ENCODE measurements at regions of chr10 and their contacts with region 1.

Region 1: DNA sequence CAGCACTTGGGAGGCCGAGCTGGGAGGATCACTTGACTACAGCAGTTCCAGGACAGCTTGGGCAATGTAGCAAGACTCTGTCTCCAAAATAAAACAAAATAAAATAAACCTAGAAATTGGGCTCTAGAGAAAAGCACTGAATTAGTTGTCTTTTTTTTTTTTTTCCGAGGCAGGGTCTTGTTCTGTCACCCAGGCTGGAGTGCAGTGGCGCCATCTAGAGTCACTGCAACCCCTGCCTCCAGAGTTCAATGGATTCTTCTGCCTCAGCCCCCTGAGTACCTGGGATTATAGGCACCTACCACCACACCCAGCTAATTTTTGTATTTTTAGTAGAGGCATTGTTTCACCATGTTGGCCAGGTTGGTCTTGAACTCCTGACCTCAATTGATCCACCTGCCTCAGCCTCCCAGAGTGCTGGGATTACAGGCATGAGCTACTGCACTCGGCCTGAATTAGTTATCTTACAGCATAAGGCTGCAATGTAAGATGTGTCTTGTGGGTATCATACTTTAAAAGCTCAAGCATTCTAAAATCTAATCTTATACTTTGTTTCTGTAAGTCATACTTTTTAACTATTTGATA is 12.8 kb downstream of the MEIG1 start:
- H3K4me3 ChIP-seq: no peak overlapping the region
- H3K27ac ChIP-seq: no peak overlapping the region
- H3K4me1 ChIP-seq: no peaks in the 10 kb centered on the region
- CTCF ChIP-seq: no peak

Region 2: GRCh38 chr10:14959276-14960057 is 12.5 kb before region 1 on chr10 and contains the start of gene MEIG1:
- CTCF ChIA-PET with region 1: interaction called, 14 read pairs
- POLR2A ChIA-PET with region 1: interaction called, 7 read pairs
- H3K4me3 ChIP-seq: peak within 1 kb of the TSS; percentile 74
- H3K27ac ChIP-seq: peak within 1 kb of the TSS; percentile 90
- H3K4me1 ChIP-seq: no peaks in the 10 kb centered on the region
- CTCF ChIP-seq: no peak

Region 3: DNA sequence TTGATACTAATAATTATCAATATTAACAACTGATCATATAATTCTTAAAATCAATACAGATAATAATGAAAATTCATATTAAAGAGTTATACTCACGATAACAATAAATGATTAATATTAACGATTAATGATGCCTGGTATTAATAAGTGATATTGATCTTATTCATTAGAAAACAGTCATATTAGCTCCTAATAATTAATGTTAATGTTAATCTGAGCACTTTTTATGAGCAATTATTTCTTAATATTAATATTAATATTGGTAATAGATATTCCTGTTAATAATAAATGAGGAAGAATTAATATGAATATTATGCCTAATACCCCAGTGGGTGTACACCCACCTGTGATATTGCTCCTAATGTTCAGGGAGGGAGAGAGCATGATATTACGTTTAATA is 10.8 kb after region 1 on chr10:
- CTCF ChIA-PET with region 1: interaction called, 21 read pairs
- POLR2A ChIA-PET with region 1: no interaction called
- H3K4me3 ChIP-seq: no peak overlapping the region
- H3K27ac ChIP-seq: no peak overlapping the region
- H3K4me1 ChIP-seq: no peaks in the 10 kb centered on the region
- CTCF ChIP-seq: no peak

Region 4: DNA sequence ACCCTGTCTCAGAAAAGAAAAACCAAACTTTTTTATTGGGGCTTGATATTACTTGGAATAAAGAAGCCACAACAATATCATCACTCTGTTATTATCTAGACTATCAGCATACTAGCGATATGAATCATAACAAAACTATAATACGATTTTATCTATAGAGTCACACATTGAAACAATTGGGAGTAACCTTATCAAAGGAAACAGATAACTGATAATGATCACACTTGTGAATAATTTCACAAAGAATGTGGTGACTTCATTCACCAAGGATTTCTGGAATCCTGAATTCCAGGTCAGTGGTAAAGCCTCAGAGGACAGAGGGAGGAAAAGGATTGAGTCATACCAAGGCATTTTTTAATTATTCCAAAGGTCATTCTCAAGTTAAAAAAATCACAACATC is 228.7 kb after region 1 on chr10:
- CTCF ChIA-PET with region 1: no interaction called
- POLR2A ChIA-PET with region 1: no interaction called
- H3K4me3 ChIP-seq: no peak overlapping the region
- H3K27ac ChIP-seq: no peak overlapping the region
- H3K4me1 ChIP-seq: no peaks in the 10 kb centered on the region
- CTCF ChIP-seq: no peak

Region 5: DNA sequence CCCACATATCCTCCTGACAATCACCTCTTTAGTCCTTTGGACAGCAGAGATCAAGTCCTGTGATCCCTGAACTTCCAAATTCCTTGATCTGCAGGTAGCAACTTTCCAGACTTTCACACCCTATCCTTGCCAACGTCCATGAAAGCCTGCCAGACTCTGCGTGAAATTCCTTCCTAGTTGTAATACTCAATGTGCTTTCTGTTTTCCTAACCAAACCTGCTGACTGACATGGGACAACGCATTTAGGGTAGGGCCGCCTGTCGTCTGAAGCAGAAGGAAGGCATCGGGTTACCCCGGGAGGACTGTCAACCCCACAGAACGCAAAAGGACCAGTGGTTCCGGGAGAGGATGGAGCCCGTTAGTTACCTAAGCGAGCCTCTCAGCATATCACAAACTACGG is 723.9 kb after region 1 on chr10:
- CTCF ChIA-PET with region 1: no interaction called
- POLR2A ChIA-PET with region 1: no interaction called
- H3K4me3 ChIP-seq: no peak overlapping the region
- H3K27ac ChIP-seq: no peak overlapping the region
- H3K4me1 ChIP-seq: no peaks in the 10 kb centered on the region
- CTCF ChIP-seq: no peak